ENCODE measurements at regions of chr14 and their contacts with region 1.

Region 1: DNA sequence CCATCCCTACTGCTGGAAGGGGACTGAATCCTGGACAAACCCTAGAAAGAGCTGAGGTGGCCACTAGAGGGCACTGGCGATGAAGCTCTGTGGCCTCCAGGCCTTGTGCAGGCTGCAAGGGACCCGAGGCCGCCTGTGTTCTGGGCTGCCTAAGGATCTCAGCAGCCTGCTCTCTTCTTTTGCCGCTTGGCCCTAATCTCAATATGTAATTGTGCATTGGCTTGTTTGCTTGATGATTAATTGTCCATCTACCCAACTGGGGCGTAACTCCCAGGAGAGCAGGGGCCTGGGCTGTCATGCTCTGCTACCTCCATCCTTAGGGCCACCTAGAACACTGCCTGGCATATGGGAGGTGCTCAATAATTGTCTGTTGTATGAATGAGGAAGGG is 73.8 kb downstream of the SYNE3 start:
- DNase-seq: peak; percentile 76
- H3K4me3 ChIP-seq: no peak overlapping the region
- H3K27ac ChIP-seq: no peak overlapping the region
- H3K4me1 ChIP-seq: no peaks in the 10 kb centered on the region
- H3K27me3 ChIP-seq: no peaks in the 10 kb centered on the region
- CTCF ChIP-seq: peak; percentile 91
- POLR2A ChIP-seq: no peak

Region 2: GRCh38 chr14:95408731-95409476 is 33.7 kb before region 1 on chr14:
- CTCF ChIA-PET with region 1: no interaction called
- POLR2A ChIA-PET with region 1: no interaction called
- dilution Hi-C with region 1: no loop called
- intact Hi-C with region 1: no loop called
- DNase-seq: no peak
- H3K4me3 ChIP-seq: no peak overlapping the region
- H3K27ac ChIP-seq: no peak overlapping the region
- H3K4me1 ChIP-seq: no peaks in the 10 kb centered on the region
- H3K27me3 ChIP-seq: no peaks in the 10 kb centered on the region
- CTCF ChIP-seq: no peak
- POLR2A ChIP-seq: no peak

Region 3: GRCh38 chr14:95471016-95471415 is 28.4 kb after region 1 on chr14:
- CTCF ChIA-PET with region 1: interaction called, 10 read pairs
- POLR2A ChIA-PET with region 1: no interaction called
- dilution Hi-C with region 1: no loop called
- intact Hi-C with region 1: no loop called
- DNase-seq: no peak
- H3K4me3 ChIP-seq: no peak overlapping the region
- H3K27ac ChIP-seq: no peak overlapping the region
- H3K4me1 ChIP-seq: no peaks in the 10 kb centered on the region
- H3K27me3 ChIP-seq: no peaks in the 10 kb centered on the region
- CTCF ChIP-seq: no peak
- POLR2A ChIP-seq: no peak

Region 4: GRCh38 chr14:95515596-95516552 is 73.2 kb after region 1 on chr14:
- CTCF ChIA-PET with region 1: interaction called, 33 read pairs
- POLR2A ChIA-PET with region 1: interaction called, 3 read pairs
- dilution Hi-C with region 1: no loop called
- intact Hi-C with region 1: loop called (anchors 2 kb)
- DNase-seq: peak; percentile 49
- H3K4me3 ChIP-seq: peak overlapping the region; percentile 51 to 58 (median 52)
- H3K27ac ChIP-seq: no peak overlapping the region
- H3K4me1 ChIP-seq: peaks cover 55% of the 10 kb centered on the region
- H3K27me3 ChIP-seq: no peaks in the 10 kb centered on the region
- CTCF ChIP-seq: peak; percentile 24 to 57
- POLR2A ChIP-seq: no peak

Region 5: GRCh38 chr14:95545179-95546168 is 102.8 kb after region 1 on chr14:
- CTCF ChIA-PET with region 1: interaction called, 19 read pairs
- POLR2A ChIA-PET with region 1: no interaction called
- dilution Hi-C with region 1: no loop called
- intact Hi-C with region 1: no loop called
- DNase-seq: peak; percentile 82
- H3K4me3 ChIP-seq: peak overlapping the region in 1 of 3 experiments; percentile 16
- H3K27ac ChIP-seq: peak overlapping the region; percentile 72
- H3K4me1 ChIP-seq: peaks cover 40% of the 10 kb centered on the region
- H3K27me3 ChIP-seq: no peaks in the 10 kb centered on the region
- CTCF ChIP-seq: no peak
- POLR2A ChIP-seq: no peak

Region 6: GRCh38 chr14:95697764-95698163 is 255.1 kb after region 1 on chr14:
- CTCF ChIA-PET with region 1: no interaction called
- POLR2A ChIA-PET with region 1: no interaction called
- dilution Hi-C with region 1: no loop called
- intact Hi-C with region 1: no loop called
- DNase-seq: no peak
- H3K4me3 ChIP-seq: no peak overlapping the region
- H3K27ac ChIP-seq: no peak overlapping the region
- H3K4me1 ChIP-seq: no peaks in the 10 kb centered on the region
- H3K27me3 ChIP-seq: no peaks in the 10 kb centered on the region
- CTCF ChIP-seq: no peak
- POLR2A ChIP-seq: no peak

Region 7: GRCh38 chr14:95774265-95775160 is 331.9 kb after region 1 on chr14:
- CTCF ChIA-PET with region 1: interaction called, 19 read pairs
- POLR2A ChIA-PET with region 1: no interaction called
- dilution Hi-C with region 1: no loop called
- intact Hi-C with region 1: loop called (anchors 5 kb)
- DNase-seq: peak; percentile 55
- H3K4me3 ChIP-seq: no peak overlapping the region
- H3K27ac ChIP-seq: no peak overlapping the region
- H3K4me1 ChIP-seq: no peaks in the 10 kb centered on the region
- H3K27me3 ChIP-seq: no peaks in the 10 kb centered on the region
- CTCF ChIP-seq: peak; percentile 76 to 85
- POLR2A ChIP-seq: no peak